ENCODE measurements at regions of chr4 and their contacts with region 1.

Region 1: GRCh38 chr4:37415845-37416369 is 171.4 kb downstream of the NWD2 start:
- DNase-seq: no peak
- H3K4me3 ChIP-seq: no peak overlapping the region
- H3K27ac ChIP-seq: no peak overlapping the region
- H3K4me1 ChIP-seq: no peaks in the 10 kb centered on the region
- H3K27me3 ChIP-seq: no peaks in the 10 kb centered on the region
- CTCF ChIP-seq: no peak

Region 2: DNA sequence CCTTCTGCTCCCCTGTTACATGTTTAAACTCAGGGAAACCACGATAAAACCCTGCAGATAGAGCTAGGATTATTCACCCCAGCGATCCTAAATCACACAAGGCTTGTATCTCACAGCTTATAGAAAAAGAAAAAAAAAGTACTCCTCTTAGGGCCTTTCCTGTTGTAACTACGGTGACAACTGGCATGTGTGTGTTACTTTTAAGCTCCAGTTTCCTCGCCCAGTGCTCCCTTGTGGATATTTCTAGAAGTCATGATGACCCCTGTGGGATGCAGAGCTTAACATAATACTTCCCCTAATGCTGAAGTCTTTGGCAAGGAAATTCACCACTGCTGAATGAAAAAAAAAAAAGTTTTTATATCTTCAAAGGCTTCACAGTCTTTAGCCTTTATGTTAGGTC is 56.6 kb before region 1 on chr4:
- CTCF ChIA-PET with region 1: no interaction called
- POLR2A ChIA-PET with region 1: no interaction called
- intact Hi-C with region 1: no loop called
- DNase-seq: no peak
- H3K4me3 ChIP-seq: no peak overlapping the region
- H3K27ac ChIP-seq: no peak overlapping the region
- H3K4me1 ChIP-seq: no peaks in the 10 kb centered on the region
- H3K27me3 ChIP-seq: no peaks in the 10 kb centered on the region
- CTCF ChIP-seq: no peak

Region 3: DNA sequence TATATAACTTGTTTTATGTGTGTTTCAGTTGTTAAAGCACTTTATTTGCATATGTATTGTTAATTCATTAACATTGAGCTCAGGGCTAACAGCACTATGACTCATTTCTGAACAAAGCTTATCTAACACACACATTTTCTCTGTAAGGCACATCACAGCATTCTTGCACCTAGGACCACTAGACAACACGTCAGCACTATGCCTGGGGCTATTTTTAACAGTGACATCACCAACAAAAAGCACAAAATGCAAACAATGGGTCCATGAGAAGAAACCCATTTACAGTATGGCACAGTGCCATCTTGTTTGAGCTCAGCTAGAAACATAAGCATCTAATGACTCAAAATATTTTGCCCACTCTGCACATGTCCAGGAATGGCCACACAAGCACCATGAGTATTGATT is 145.9 kb after region 1 on chr4:
- CTCF ChIA-PET with region 1: interaction called, 23 read pairs
- POLR2A ChIA-PET with region 1: no interaction called
- intact Hi-C with region 1: no loop called
- DNase-seq: peak; percentile 43 to 78
- H3K4me3 ChIP-seq: no peak overlapping the region
- H3K27ac ChIP-seq: peak overlapping the region; percentile 61
- H3K4me1 ChIP-seq: peaks cover 24% of the 10 kb centered on the region
- H3K27me3 ChIP-seq: no peaks in the 10 kb centered on the region
- CTCF ChIP-seq: no peak

Region 4: DNA sequence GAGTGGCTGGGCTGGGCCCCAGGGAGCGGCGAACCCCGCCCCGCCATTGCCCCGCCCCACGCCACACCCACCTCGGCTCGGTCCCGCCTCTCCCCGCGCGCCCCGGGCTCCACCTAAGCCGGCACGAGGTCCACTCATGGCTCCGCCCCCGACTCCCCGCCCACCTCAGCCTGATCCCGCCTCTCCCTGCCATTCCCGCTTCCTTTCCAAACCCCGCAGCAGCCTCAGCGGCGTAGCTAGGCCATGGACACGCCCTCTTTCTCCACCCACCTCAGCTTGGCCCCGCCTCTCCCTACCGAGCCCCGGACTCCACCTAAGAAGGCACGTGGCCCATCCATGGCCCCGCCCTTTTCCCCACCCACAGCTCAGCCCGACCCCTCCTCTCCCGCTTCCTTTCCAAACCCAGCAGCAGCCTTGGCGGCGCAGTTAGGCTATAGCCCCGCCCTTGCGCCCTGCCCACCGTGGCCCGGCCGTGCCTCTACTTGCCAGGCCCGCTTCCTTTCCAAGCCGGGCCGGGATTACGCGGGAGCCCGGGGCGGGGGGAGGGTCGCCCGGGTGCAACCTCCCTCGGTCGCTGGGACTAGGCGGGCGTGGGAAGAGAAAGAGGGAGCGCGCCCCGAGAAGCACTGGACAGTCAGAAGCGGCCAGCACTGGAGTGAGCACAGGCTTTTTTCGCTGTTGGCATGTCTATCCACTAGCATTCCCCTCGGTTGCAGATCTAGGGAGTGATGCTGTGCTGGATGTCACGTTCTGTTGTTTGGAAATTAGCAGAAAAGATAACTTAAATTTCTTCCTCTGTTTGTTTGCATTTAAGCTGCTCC is 270.7 kb after region 1 on chr4 and contains the start of gene RELL1:
- CTCF ChIA-PET with region 1: no interaction called
- POLR2A ChIA-PET with region 1: no interaction called
- intact Hi-C with region 1: no loop called
- DNase-seq: peak; percentile 94 to 100
- H3K4me3 ChIP-seq: peak within 1 kb of the TSS; percentile 77
- H3K27ac ChIP-seq: no peak within 1 kb of the TSS
- H3K4me1 ChIP-seq: peaks cover 12% of the 10 kb centered on the region; the same call in 1 of the 2 replicates
- H3K27me3 ChIP-seq: no peaks in the 10 kb centered on the region
- CTCF ChIP-seq: no peak
- total RNA-seq, gene RELL1: 11.9 and 18.5 TPM in 2 replicates